ENCODE measurements at regions of chr3 and their contacts with region 1.

Region 1: DNA sequence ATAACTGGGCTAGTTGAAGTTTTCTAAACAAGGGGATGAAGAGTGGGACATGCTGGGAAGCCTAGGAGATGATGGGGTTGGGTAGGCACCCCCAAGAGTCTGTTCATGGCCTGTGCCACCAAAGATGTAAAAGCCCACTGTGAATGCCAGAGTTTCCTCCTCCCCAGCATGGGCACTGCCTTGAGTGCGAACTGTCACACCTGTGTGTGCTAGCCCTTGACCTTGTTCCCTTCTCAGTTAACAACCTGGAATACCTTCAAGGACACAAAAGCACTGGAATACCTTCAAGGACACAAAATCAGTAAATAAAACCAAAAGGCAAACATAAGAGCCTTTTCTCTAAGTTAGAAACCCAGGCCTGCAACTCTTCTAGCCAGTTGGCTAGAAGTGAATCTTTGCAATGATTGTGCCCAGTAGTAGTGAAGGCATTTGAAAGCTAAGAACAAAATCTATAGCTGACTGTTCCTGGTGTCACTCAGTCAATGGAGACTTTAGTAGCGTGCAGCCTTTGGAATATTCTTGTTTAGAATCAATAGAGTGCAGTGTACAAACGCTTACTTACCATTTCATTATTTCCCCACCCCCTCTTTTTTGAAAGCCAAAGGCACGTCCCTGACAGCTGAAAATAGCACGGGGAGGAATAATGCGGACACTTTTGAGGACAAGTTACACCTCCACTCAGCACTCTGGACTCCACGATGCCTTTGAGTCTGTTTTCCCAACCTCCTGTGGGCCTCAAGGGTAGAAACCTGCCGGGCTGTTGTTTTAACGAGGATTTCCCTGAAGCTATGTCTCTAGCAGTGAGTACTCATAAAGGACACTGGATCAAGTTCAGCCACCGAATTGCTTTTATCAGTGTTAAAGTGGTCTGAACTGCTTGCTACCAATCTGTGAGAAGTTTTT is 24.2 kb downstream of the PSMD6 start:
- DNase-seq: no peak
- ATAC-seq: no peak
- H3K4me3 ChIP-seq: no peak overlapping the region
- H3K27ac ChIP-seq: no peak overlapping the region
- H3K4me1 ChIP-seq: no peaks in the 10 kb centered on the region
- H3K27me3 ChIP-seq: no peaks in the 10 kb centered on the region
- CTCF ChIP-seq: no peak
- EP300 ChIP-seq: no peak
- POLR2A ChIP-seq: no peak
- RAD21 ChIP-seq: no peak

Region 2: DNA sequence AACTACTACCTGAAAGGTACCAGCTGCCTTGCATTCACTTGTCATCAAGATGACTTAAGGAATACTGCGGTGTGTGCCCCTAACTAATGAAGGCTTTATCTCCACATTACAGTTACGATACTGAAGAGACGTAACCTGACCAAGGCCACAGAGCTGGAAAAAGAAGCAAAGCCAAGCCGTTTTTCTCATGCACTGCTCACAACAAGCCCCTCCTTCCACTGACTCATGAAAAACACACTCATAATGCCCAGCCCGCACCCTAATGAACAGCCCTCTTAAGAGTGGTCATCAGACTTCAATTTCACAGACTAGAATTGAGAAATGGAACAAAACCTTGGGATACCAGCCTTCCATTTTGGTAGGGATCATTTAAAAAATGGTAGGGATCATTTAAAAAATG is 12.6 kb after region 1 on chr3:
- CTCF ChIA-PET with region 1: interaction called, 36 read pairs
- POLR2A ChIA-PET with region 1: no interaction called
- RAD21 ChIA-PET with region 1: interaction called, 5 read pairs
- SMC1A ChIA-PET with region 1: interaction called, 6 read pairs
- in situ Hi-C with region 1: no loop called
- intact Hi-C with region 1: no loop called
- DNase-seq: no peak
- ATAC-seq: no peak
- H3K4me3 ChIP-seq: no peak overlapping the region
- H3K27ac ChIP-seq: no peak overlapping the region
- H3K4me1 ChIP-seq: peaks cover 6% of the 10 kb centered on the region
- H3K27me3 ChIP-seq: no peaks in the 10 kb centered on the region
- CTCF ChIP-seq: no peak
- EP300 ChIP-seq: no peak
- POLR2A ChIP-seq: no peak
- RAD21 ChIP-seq: no peak

Measured in GM12878 (cell line).